GM12878 (cell line): ENCODE measurements at regions of chr6 and their contacts with region 1.

Region 1: GRCh38 chr6:34602318-34603111 is 46.4 kb upstream of the SPDEF start:
- DNase-seq: no peak
- ATAC-seq: no peak
- H3K4me3 ChIP-seq: no peak overlapping the region
- H3K27ac ChIP-seq: no peak overlapping the region
- H3K4me1 ChIP-seq: no peaks in the 10 kb centered on the region
- H3K27me3 ChIP-seq: no peaks in the 10 kb centered on the region
- CTCF ChIP-seq: no peak
- EP300 ChIP-seq: no peak
- POLR2A ChIP-seq: no peak
- RAD21 ChIP-seq: no peak

Region 2: DNA sequence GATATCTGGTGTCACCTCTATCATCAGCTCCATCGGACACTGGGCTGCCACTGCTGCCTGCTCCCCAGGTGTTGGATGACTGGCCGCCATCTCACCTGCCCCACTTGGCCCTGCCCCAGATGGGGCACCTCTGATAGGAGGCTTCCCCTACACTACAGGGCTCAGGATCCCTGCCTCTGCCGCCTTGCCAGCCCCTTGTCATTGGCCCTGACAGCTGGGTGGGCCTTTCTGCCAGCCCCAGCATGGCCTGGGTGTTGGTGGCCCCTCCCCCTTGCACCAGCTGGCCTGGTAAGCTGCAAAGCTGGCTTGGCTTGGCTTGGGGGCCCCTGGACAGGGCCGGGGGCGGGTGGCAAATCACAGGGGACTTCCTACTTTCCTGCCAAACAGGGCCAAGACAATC is 126.1 kb before region 1 on chr6:
- CTCF ChIA-PET with region 1: no interaction called
- POLR2A ChIA-PET with region 1: interaction called, 13 read pairs
- RAD21 ChIA-PET with region 1: no interaction called
- SMC1A ChIA-PET with region 1: no interaction called
- in situ Hi-C with region 1: no loop called
- intact Hi-C with region 1: no loop called
- DNase-seq: no peak
- ATAC-seq: no peak; the same call in 2 of the 3 replicates
- H3K4me3 ChIP-seq: no peak overlapping the region
- H3K27ac ChIP-seq: no peak overlapping the region
- H3K4me1 ChIP-seq: no peaks in the 10 kb centered on the region
- H3K27me3 ChIP-seq: no peaks in the 10 kb centered on the region
- CTCF ChIP-seq: no peak
- EP300 ChIP-seq: no peak
- POLR2A ChIP-seq: no peak
- RAD21 ChIP-seq: no peak

Region 3: DNA sequence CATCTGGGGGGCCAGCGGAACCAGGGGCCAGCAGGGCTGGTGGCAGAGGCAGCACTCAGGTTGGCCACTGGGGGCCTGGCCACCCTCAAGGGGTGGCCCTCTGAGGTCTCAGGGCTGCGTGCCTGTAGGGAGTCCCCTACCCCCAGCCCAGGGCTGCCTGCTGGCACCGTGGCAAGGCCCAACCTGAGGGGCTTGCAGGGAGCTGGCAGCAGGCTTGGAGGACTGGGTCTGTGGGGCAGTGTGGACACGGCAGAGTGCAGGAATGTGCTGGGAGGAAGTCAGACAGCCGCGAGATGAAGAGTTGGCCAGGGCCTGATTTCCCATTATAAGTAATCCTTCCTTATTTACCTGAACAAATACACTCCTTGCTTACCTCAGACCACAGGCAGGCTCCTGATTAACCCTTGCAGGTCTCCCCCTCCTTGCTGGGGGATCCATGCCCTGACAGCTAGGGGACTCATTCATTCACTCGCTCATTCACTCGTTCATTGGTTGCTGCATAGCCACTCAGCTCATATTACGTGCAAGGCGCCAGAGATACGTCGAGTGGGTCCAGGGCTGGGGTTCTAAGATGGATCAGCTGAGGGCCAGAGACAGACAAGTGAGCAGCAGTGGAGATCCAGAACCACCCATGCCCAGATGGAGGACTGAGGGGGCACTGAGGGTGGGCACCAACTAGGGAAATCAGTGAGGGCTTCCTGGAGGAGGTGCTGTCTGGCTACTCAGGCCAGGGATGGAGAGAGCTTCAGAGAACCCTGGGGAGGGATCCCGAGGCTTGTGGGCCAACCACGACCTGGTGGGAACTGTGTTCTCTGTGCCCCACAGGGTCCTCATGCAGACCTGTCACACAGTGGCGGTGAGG is 46.3 kb before region 1 on chr6 and contains the start of gene SPDEF:
- CTCF ChIA-PET with region 1: no interaction called
- POLR2A ChIA-PET with region 1: no interaction called
- RAD21 ChIA-PET with region 1: no interaction called
- SMC1A ChIA-PET with region 1: no interaction called
- in situ Hi-C with region 1: no loop called
- intact Hi-C with region 1: no loop called
- DNase-seq: no peak
- ATAC-seq: no peak
- H3K4me3 ChIP-seq: no peak within 1 kb of the TSS
- H3K27ac ChIP-seq: no peak within 1 kb of the TSS
- H3K4me1 ChIP-seq: no peaks in the 10 kb centered on the region
- H3K27me3 ChIP-seq: peaks cover 0 to under 1% of the 10 kb centered on the region in 2 experiments; a peak in 1 of 4 replicates
- CTCF ChIP-seq: no peak
- EP300 ChIP-seq: no peak
- POLR2A ChIP-seq: no peak
- RAD21 ChIP-seq: no peak
- polyA plus RNA-seq, gene SPDEF: not detected